Activated T-helper 2 cell treated with anti-CD3 and anti-CD28 coated beads, Interferon-gamma antibody, Interleukin-2, Interleukin-4, amounts not matched to agents 10 μg/mL and 5 μg/mL and 100 μg/mL, durations not matched to agents 14 hours and 24 hours and 36 hours (primary cell): ENCODE measurements at regions of chr16 and their contacts with region 1.

Region 1: DNA sequence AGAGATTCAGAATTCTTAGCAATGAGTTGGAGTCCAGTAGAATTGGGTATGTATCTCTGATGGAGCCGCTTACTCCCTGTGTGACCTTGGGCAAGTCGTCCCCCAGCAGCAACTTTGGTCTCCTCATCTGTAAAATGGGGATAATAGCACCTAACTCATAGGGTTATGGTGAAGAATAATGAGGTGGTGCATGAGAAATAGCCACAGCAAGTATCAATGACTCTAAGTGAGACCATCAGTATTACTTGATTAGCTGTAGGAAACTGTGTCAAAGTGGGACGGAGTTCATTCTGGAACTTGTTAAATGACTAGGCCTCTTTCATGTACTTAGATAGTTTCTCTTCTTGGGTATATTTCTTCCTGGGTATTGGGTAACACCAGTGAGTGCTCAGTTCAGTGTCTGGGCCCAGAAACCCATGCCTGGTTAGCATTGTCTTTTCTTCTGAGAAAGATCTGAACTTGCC is 6.4 kb downstream of the PRKCB start:
- DNase-seq: peak; percentile 25
- H3K4me3 Mint-ChIP-seq: peak overlapping the region; percentile 27
- H3K27ac Mint-ChIP-seq: peak overlapping the region; percentile 88
- H3K4me1 Mint-ChIP-seq: peaks cover 80% of the 10 kb centered on the region
- H3K27me3 Mint-ChIP-seq: no peaks in the 10 kb centered on the region

Region 2: GRCh38 chr16:23826528-23827045 is 15.6 kb before region 1 on chr16:
- intact Hi-C with region 1: loop called (anchors 1 kb)
- DNase-seq: no peak
- H3K4me3 Mint-ChIP-seq: peak overlapping the region; percentile 10
- H3K27ac Mint-ChIP-seq: peak overlapping the region; percentile 13
- H3K4me1 Mint-ChIP-seq: peaks cover 40% of the 10 kb centered on the region
- H3K27me3 Mint-ChIP-seq: no peaks in the 10 kb centered on the region

Region 3: GRCh38 chr16:23852794-23853562 is 10.8 kb after region 1 on chr16:
- intact Hi-C with region 1: loop called (anchors 1 kb)
- DNase-seq: no peak
- H3K4me3 Mint-ChIP-seq: no peak overlapping the region
- H3K27ac Mint-ChIP-seq: peak overlapping the region; percentile 58
- H3K4me1 Mint-ChIP-seq: peaks cover 74% of the 10 kb centered on the region
- H3K27me3 Mint-ChIP-seq: no peaks in the 10 kb centered on the region

Region 4: GRCh38 chr16:23959072-23959751 is 117.0 kb after region 1 on chr16:
- intact Hi-C with region 1: loop called (anchors 2 kb)
- DNase-seq: no peak
- H3K4me3 Mint-ChIP-seq: peak overlapping the region; percentile 37
- H3K27ac Mint-ChIP-seq: peak overlapping the region; percentile 74
- H3K4me1 Mint-ChIP-seq: peaks cover 52% of the 10 kb centered on the region
- H3K27me3 Mint-ChIP-seq: no peaks in the 10 kb centered on the region